Calu3 (cell line): ENCODE measurements at regions of chr2 and their contacts with region 1.

Region 1: GRCh38 chr2:74334931-74335333 is 8.3 kb downstream of the SLC4A5 start:
- DNase-seq: peak; percentile 83
- H3K4me3 Mint-ChIP-seq: no peak overlapping the region
- H3K27ac Mint-ChIP-seq: no peak overlapping the region
- H3K4me1 Mint-ChIP-seq: no peaks in the 10 kb centered on the region
- H3K27me3 Mint-ChIP-seq: no peaks in the 10 kb centered on the region
- CTCF ChIP-seq: peak; percentile 89

Region 2: GRCh38 chr2:74221604-74222299 is 113.2 kb before region 1 on chr2:
- CTCF ChIA-PET with region 1: no interaction called
- intact Hi-C with region 1: no loop called
- DNase-seq: no peak
- H3K4me3 Mint-ChIP-seq: no peak overlapping the region
- H3K27ac Mint-ChIP-seq: no peak overlapping the region
- H3K4me1 Mint-ChIP-seq: peaks cover 11% of the 10 kb centered on the region
- H3K27me3 Mint-ChIP-seq: no peaks in the 10 kb centered on the region
- CTCF ChIP-seq: no peak

Region 3: DNA sequence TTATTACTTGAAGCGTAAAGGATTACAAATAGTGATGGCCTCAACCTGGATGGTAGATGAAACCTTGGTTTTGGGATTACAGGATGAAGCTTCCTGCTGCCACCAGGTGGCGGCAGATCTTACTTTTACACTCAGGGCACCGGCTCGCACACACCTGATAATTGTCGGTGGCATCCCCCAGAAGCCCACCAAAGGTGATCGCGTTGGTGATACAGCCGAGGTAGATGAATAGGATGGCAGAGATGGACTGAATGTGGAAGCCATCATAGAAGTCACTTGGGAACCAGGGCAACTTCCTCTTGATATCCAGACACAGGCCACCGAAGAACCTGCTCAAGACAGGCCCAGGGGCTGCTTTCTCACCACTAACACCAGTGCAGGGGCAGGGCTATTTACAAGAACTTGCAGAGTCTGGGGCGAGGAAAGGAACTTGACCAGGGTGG is 84.7 kb before region 1 on chr2:
- CTCF ChIA-PET with region 1: interaction called, 14 read pairs
- intact Hi-C with region 1: loop called (anchors 2 kb)
- DNase-seq: peak; percentile 54
- H3K4me3 Mint-ChIP-seq: no peak overlapping the region
- H3K27ac Mint-ChIP-seq: no peak overlapping the region
- H3K4me1 Mint-ChIP-seq: no peaks in the 10 kb centered on the region
- H3K27me3 Mint-ChIP-seq: no peaks in the 10 kb centered on the region
- CTCF ChIP-seq: peak; percentile 87

Region 4: GRCh38 chr2:74267068-74267467 is 67.9 kb before region 1 on chr2:
- CTCF ChIA-PET with region 1: interaction called, 8 read pairs
- intact Hi-C with region 1: loop called (anchors 2 kb)
- DNase-seq: peak; percentile 67
- H3K4me3 Mint-ChIP-seq: no peak overlapping the region
- H3K27ac Mint-ChIP-seq: no peak overlapping the region
- H3K4me1 Mint-ChIP-seq: no peaks in the 10 kb centered on the region
- H3K27me3 Mint-ChIP-seq: no peaks in the 10 kb centered on the region
- CTCF ChIP-seq: no peak

Region 5: GRCh38 chr2:74515981-74516633 is 181.2 kb after region 1 on chr2:
- CTCF ChIA-PET with region 1: no interaction called
- intact Hi-C with region 1: no loop called
- DNase-seq: no peak
- H3K4me3 Mint-ChIP-seq: no peak overlapping the region
- H3K27ac Mint-ChIP-seq: no peak overlapping the region
- H3K4me1 Mint-ChIP-seq: no peaks in the 10 kb centered on the region
- H3K27me3 Mint-ChIP-seq: peaks cover 92% of the 10 kb centered on the region
- CTCF ChIP-seq: no peak

Region 6: DNA sequence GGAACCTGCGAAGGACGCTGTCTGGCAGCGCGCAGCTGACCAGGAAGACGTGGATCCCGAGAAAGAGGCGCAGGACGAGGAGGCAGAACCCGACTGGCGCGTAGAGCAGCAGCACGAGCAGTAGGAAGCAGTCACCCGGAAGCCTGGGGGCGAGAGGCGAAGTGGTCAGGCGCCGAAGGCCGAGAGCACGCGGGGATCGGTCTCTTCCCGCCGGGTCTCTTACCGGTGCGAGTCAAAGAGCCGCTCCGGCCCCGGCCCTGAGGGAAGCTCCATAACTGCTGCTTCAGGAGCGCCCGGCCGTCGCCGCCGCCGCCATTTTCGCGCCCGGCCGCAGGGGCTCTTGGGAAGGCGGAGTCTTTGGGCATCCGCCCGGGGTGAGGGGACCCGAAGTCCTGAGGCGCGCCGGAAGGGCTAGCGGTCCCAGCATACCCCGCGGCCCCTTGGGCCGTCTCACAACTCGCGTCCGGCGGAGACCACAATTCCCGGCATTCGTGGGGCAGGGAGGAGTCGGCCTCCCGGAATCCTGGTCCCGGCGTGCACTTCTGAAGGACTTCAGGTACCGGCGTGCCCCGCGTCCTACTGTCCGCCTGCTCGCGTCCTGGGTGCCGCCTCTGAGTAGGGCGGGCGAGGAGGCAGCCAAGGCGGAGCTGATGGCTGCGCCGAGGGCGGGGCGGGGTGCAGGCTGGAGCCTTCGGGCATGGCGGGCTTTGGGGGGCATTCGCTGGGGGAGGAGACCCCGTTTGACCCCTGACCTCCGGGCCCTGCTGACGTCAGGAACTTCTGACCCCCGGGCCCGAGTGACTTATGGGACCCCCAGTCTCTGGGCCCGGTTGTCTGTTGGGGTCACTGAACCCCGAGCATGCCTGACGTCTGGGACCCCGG is 194.7 kb after region 1 on chr2 and contains the starts of genes AUP1 and HTRA2:
- CTCF ChIA-PET with region 1: interaction called, 3 read pairs
- intact Hi-C with region 1: loop called (anchors 10 kb)
- DNase-seq: peak; percentile 98
- H3K4me3 Mint-ChIP-seq: peak within 1 kb of the TSS; percentile 95
- H3K27ac Mint-ChIP-seq: peak within 1 kb of the TSS; percentile 93
- H3K4me1 Mint-ChIP-seq: peaks cover 28% of the 10 kb centered on the region
- H3K27me3 Mint-ChIP-seq: no peaks in the 10 kb centered on the region
- CTCF ChIP-seq: no peak
- total RNA-seq, gene AUP1: 145 and 153 TPM in 2 replicates
- total RNA-seq, gene HTRA2: 23.4 and 26.3 TPM in 2 replicates